Activated B cell treated with CpG ODN at 0.5 μM for 24 hours (primary cell): ENCODE measurements at regions of chr17 and their contacts with region 1.

Region 1: GRCh38 chr17:73192894-73193701 is at the start of gene COG1:
- DNase-seq: peak; percentile 65
- ATAC-seq: peak; percentile 87
- H3K4me3 Mint-ChIP-seq: peak within 1 kb of the TSS; percentile 96
- H3K27ac Mint-ChIP-seq: peak within 1 kb of the TSS; percentile 90
- H3K4me1 Mint-ChIP-seq: peaks cover 18% of the 10 kb centered on the region
- H3K27me3 Mint-ChIP-seq: no peaks in the 10 kb centered on the region
- CTCF ChIP-seq: no peak
- total RNA-seq, gene COG1: 35.7 and 42.2 TPM in 2 replicates

Region 2: GRCh38 chr17:72421128-72422092 is 771.7 kb before region 1 on chr17:
- CTCF ChIA-PET with region 1: no interaction called
- POLR2A ChIA-PET with region 1: no interaction called
- intact Hi-C with region 1: loop called (anchors 10 kb)
- DNase-seq: peak; percentile 21
- ATAC-seq: peak; percentile 48
- H3K4me3 Mint-ChIP-seq: peak overlapping the region; percentile 39
- H3K27ac Mint-ChIP-seq: peak overlapping the region; percentile 78
- H3K4me1 Mint-ChIP-seq: peaks cover 56% of the 10 kb centered on the region
- H3K27me3 Mint-ChIP-seq: no peaks in the 10 kb centered on the region
- CTCF ChIP-seq: no peak

Region 3: GRCh38 chr17:72952220-72952984 is 240.7 kb before region 1 on chr17:
- CTCF ChIA-PET with region 1: no interaction called
- POLR2A ChIA-PET with region 1: no interaction called
- intact Hi-C with region 1: no loop called
- DNase-seq: no peak
- ATAC-seq: no peak
- H3K4me3 Mint-ChIP-seq: no peak overlapping the region
- H3K27ac Mint-ChIP-seq: no peak overlapping the region
- H3K4me1 Mint-ChIP-seq: no peaks in the 10 kb centered on the region
- H3K27me3 Mint-ChIP-seq: no peaks in the 10 kb centered on the region
- CTCF ChIP-seq: no peak

Region 4: GRCh38 chr17:73092523-73093135 is 100.5 kb before region 1 on chr17 and contains the start of gene SLC39A11:
- CTCF ChIA-PET with region 1: no interaction called
- POLR2A ChIA-PET with region 1: no interaction called
- intact Hi-C with region 1: loop called (anchors 1 kb)
- DNase-seq: peak; percentile 79
- ATAC-seq: peak; percentile 98
- H3K4me3 Mint-ChIP-seq: peak within 1 kb of the TSS; percentile 99
- H3K27ac Mint-ChIP-seq: peak within 1 kb of the TSS; percentile 91
- H3K4me1 Mint-ChIP-seq: peaks cover 25% of the 10 kb centered on the region
- H3K27me3 Mint-ChIP-seq: peaks cover 7% of the 10 kb centered on the region
- CTCF ChIP-seq: no peak
- total RNA-seq, gene SLC39A11: 27.2 and 34.8 TPM in 2 replicates

Region 5: GRCh38 chr17:73231841-73232586 is 38.9 kb after region 1 on chr17:
- CTCF ChIA-PET with region 1: interaction called, 4 read pairs
- POLR2A ChIA-PET with region 1: interaction called, 17 read pairs
- intact Hi-C with region 1: loop called (anchors 1 kb)
- DNase-seq: peak; percentile 97
- ATAC-seq: peak; percentile 95
- H3K4me3 Mint-ChIP-seq: peak overlapping the region; percentile 93
- H3K27ac Mint-ChIP-seq: peak overlapping the region; percentile 97
- H3K4me1 Mint-ChIP-seq: peaks cover 54% of the 10 kb centered on the region
- H3K27me3 Mint-ChIP-seq: no peaks in the 10 kb centered on the region
- CTCF ChIP-seq: no peak

Region 6: DNA sequence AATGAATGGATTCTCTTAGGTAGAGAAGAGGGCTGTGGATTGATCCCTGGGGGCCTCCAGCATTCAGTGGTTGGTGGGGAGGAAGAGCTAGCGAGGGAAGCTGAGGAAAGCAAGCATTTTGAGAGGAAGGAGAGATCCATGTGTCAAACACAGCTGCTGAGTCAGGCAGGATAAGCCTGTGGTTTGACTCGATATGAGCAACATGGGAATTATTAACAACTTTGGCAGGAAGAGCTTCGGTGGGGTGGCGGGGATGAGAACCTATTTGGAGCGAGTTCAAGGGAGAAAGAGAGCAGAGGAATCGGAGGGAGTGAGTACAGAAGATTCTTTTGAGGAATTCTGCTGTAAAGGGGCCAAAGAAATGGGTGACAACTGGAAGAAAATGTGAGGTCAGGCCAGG is 178.2 kb after region 1 on chr17:
- CTCF ChIA-PET with region 1: interaction called, 7 read pairs
- POLR2A ChIA-PET with region 1: no interaction called
- intact Hi-C with region 1: loop called (anchors 1 kb)
- DNase-seq: no peak
- ATAC-seq: no peak
- H3K4me3 Mint-ChIP-seq: no peak overlapping the region
- H3K27ac Mint-ChIP-seq: no peak overlapping the region
- H3K4me1 Mint-ChIP-seq: peaks cover 2% of the 10 kb centered on the region
- H3K27me3 Mint-ChIP-seq: no peaks in the 10 kb centered on the region
- CTCF ChIP-seq: no peak